CD4-positive, alpha-beta T cell (primary cell): ENCODE measurements at regions of chr19 and their contacts with region 1.

Region 1: DNA sequence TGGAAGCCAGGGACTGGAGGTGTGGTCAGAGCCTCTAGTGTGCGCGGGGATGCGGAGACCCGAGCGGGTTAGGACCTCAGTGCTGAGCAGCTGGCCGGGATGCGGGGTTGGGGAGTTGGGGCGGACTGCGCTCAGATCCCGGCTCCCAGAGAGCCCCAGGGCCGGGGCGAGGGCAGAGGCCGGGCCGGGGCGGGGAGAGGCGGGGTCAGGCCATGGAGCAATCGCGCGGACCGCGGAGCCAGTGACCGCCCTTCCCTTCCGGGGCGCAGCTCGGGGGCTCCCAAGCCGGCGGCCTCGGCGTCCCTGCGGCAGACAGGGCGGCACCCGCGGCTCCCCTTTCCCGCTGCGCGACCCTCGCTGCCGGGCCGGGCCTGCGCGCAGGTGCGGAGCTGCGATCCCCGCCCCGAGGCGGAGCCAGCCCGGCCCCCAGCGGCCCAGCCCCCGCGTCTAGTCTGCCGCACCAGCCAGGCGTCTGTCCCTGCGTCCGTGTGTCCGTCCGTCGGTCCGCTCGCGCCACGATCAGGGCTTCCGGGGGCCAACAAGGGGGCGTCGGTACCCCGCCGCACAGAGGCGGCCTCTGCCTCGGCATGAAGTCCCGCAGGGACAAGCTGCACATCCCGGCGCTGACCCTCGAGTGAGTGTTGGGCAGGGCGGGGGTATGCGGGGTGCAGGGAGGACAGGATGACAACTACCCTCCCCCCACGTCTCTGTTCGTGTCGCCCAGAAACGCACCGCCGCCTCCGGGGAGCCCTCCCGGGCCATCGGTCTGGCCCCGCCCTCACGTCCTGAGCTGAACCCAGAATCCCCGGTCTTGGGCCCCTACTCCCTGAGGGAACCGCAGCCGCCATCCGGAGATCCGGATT is 12.4 kb downstream of the MAST3 start:
- DNase-seq: peak in 10 of 14 experiments; percentile 21 to 69 (median 52)
- ATAC-seq: peak; percentile 77
- H3K4me3 ChIP-seq: peak overlapping the region; percentile 65
- H3K4me3 Mint-ChIP-seq: peak overlapping the region; percentile 86
- H3K27ac ChIP-seq: peak overlapping the region in 1 of 2 donors; percentile 29
- H3K27ac Mint-ChIP-seq: peak overlapping the region; percentile 73
- H3K4me1 ChIP-seq: peaks cover 36% of the 10 kb centered on the region
- H3K4me1 Mint-ChIP-seq: peaks cover 26% of the 10 kb centered on the region
- H3K27me3 ChIP-seq: no peaks in the 10 kb centered on the region
- H3K27me3 Mint-ChIP-seq: no peaks in the 10 kb centered on the region
- CTCF ChIP-seq: no peak

Region 2: GRCh38 chr19:18044825-18045304 is 65.1 kb before region 1 on chr19:
- CTCF ChIA-PET with region 1: interaction called, 3 read pairs
- POLR2A ChIA-PET with region 1: interaction called, 10 read pairs
- intact Hi-C with region 1: no loop called
- DNase-seq: peak; percentile 68 to 95 (median 79)
- ATAC-seq: peak; percentile 95
- H3K4me3 ChIP-seq: peak overlapping the region; percentile 53
- H3K4me3 Mint-ChIP-seq: peak overlapping the region; percentile 79
- H3K27ac ChIP-seq: peak overlapping the region; percentile 56 to 67
- H3K27ac Mint-ChIP-seq: peak overlapping the region; percentile 92
- H3K4me1 ChIP-seq: peaks cover 34% of the 10 kb centered on the region
- H3K4me1 Mint-ChIP-seq: peaks cover 36% of the 10 kb centered on the region
- H3K27me3 ChIP-seq: no peaks in the 10 kb centered on the region
- H3K27me3 Mint-ChIP-seq: no peaks in the 10 kb centered on the region
- CTCF ChIP-seq: no peak

Region 3: DNA sequence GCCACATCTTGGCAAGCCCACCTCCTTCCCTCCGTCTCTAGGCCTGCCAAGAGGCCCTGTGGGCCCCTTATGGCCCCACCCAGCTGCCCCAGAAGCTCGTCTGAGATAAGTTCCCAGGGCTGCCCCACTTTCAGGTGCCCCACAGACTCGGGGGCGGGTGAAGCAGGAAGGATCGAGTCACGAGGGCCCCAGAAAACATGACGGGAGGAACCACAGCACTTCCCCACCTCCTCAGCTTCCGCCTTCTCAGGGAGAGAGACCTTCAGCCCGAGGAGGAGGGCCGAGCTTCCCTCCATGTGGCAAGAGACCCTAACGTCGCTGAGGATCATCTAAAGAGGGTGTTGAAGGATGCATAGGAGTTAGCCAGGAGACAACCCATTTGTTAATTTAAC is 18.8 kb before region 1 on chr19:
- CTCF ChIA-PET with region 1: interaction called, 5 read pairs
- POLR2A ChIA-PET with region 1: interaction called, 99 read pairs
- intact Hi-C with region 1: no loop called
- DNase-seq: peak; percentile 55 to 94 (median 74)
- ATAC-seq: peak; percentile 69
- H3K4me3 ChIP-seq: no peak overlapping the region
- H3K4me3 Mint-ChIP-seq: peak overlapping the region; percentile 82
- H3K27ac ChIP-seq: peak overlapping the region; percentile 74 to 93
- H3K27ac Mint-ChIP-seq: peak overlapping the region; percentile 98
- H3K4me1 ChIP-seq: peaks cover 67% of the 10 kb centered on the region
- H3K4me1 Mint-ChIP-seq: peaks cover 58% of the 10 kb centered on the region
- H3K27me3 ChIP-seq: no peaks in the 10 kb centered on the region
- H3K27me3 Mint-ChIP-seq: no peaks in the 10 kb centered on the region
- CTCF ChIP-seq: no peak

Region 4: GRCh38 chr19:18097217-18097992 is 12.6 kb before region 1 on chr19 and contains the start of gene MAST3:
- CTCF ChIA-PET with region 1: interaction called, 3 read pairs
- POLR2A ChIA-PET with region 1: interaction called, 99 read pairs
- intact Hi-C with region 1: no loop called
- DNase-seq: peak; percentile 81 to 96 (median 93)
- ATAC-seq: peak; percentile 98
- H3K4me3 ChIP-seq: peak within 1 kb of the TSS; percentile 59
- H3K4me3 Mint-ChIP-seq: peak within 1 kb of the TSS; percentile 91
- H3K27ac ChIP-seq: peak within 1 kb of the TSS in 1 of 2 donors; percentile 53
- H3K27ac Mint-ChIP-seq: peak within 1 kb of the TSS; percentile 67
- H3K4me1 ChIP-seq: peaks cover 35% of the 10 kb centered on the region
- H3K4me1 Mint-ChIP-seq: peaks cover 32% of the 10 kb centered on the region
- H3K27me3 ChIP-seq: no peaks in the 10 kb centered on the region
- H3K27me3 Mint-ChIP-seq: no peaks in the 10 kb centered on the region
- CTCF ChIP-seq: no peak
- total RNA-seq, gene MAST3: 16.1 to 16.4 TPM

Region 5: GRCh38 chr19:18152444-18152816 is 42.5 kb after region 1 on chr19:
- CTCF ChIA-PET with region 1: interaction called, 6 read pairs
- POLR2A ChIA-PET with region 1: interaction called, 15 read pairs
- intact Hi-C with region 1: no loop called
- DNase-seq: peak; percentile 94 to 99 (median 98)
- ATAC-seq: peak; percentile 67
- H3K4me3 ChIP-seq: peak overlapping the region; percentile 78
- H3K4me3 Mint-ChIP-seq: peak overlapping the region; percentile 86
- H3K27ac ChIP-seq: peak overlapping the region; percentile 64 to 88
- H3K27ac Mint-ChIP-seq: peak overlapping the region; percentile 80
- H3K4me1 ChIP-seq: peaks cover 36% of the 10 kb centered on the region
- H3K4me1 Mint-ChIP-seq: peaks cover 23% of the 10 kb centered on the region
- H3K27me3 ChIP-seq: no peaks in the 10 kb centered on the region
- H3K27me3 Mint-ChIP-seq: no peaks in the 10 kb centered on the region
- CTCF ChIP-seq: peak; percentile 58